Gastrocnemius medialis (tissue), 4 donors: ENCODE measurements at regions of chr19 and their contacts with region 1.

Region 1: DNA sequence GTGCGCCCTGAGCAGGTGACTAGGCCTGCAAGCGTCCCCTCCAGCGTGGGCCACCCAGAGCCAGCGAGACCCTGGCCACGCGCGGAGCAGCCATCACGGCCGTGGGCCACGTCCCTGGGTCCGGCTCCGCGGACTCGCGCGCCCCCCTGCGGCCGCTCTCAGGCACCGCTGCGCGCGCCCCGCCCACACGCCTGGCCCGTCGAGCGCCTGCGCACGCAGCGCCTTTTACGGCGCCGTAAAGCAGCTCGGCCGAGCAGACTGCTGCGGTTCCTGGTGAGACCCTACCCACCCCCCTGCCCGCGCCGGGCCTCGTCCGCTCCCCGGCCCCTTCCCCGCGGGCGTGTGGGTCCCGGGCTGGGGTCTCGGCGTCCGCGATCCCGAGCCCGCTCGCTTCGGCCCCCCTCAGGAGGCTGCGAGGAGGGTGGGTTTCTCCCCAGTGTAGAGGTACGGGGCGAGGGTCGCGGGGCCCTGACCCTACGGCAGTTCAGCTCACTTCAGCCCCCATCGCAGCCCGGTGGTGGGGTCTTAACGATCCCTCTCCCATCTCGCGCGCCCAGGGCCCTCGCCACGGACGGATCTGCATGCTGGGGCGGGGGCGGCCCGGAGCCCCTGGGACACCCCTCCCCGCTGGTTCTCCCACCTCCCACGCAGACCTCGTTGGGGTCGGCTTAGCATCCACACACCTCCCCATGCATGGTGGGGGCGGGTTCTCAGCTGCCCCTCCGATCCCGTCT is at the start of gene TRAPPC5:
- DNase-seq: peak; percentile 55 to 77
- ATAC-seq: peak; percentile 86 to 91
- H3K4me3 ChIP-seq: peak within 1 kb of the TSS; percentile 91 to 100 (median 94)
- H3K27ac ChIP-seq: peak within 1 kb of the TSS; percentile 83 to 94 (median 92)
- H3K4me1 ChIP-seq: peaks cover 4 to 9% of the 10 kb centered on the region in 2 donors
- H3K27me3 ChIP-seq: peaks cover 0 to 10% (median 0%) of the 10 kb centered on the region in 3 donors
- CTCF ChIP-seq: peak in 4 of 5 experiments; percentile 80 to 100 (median 99)
- POLR2A ChIP-seq: peak; percentile 60 to 77
- total RNA-seq, gene TRAPPC5: 109 to 146 (median 126) TPM

Region 2: GRCh38 chr19:7349961-7350711 is 330.6 kb before region 1 on chr19:
- in situ Hi-C with region 1: no loop called
- intact Hi-C with region 1: loop called (anchors 10 kb)
- DNase-seq: no peak
- ATAC-seq: no peak
- H3K4me3 ChIP-seq: no peak overlapping the region
- H3K27ac ChIP-seq: no peak overlapping the region
- H3K4me1 ChIP-seq: no peaks in the 10 kb centered on the region
- H3K27me3 ChIP-seq: peaks cover 0 to 3% (median 0%) of the 10 kb centered on the region in 3 donors
- CTCF ChIP-seq: no peak
- POLR2A ChIP-seq: no peak

Region 3: GRCh38 chr19:7562646-7563393 is 118.0 kb before region 1 on chr19:
- in situ Hi-C with region 1: loop called in 1 of 4 experiments (anchors 10 kb)
- intact Hi-C with region 1: loop called (anchors 1 kb)
- DNase-seq: no peak
- ATAC-seq: no peak
- H3K4me3 ChIP-seq: no peak overlapping the region
- H3K27ac ChIP-seq: no peak overlapping the region
- H3K4me1 ChIP-seq: no peaks in the 10 kb centered on the region
- H3K27me3 ChIP-seq: no peaks in the 10 kb centered on the region
- CTCF ChIP-seq: no peak
- POLR2A ChIP-seq: no peak

Region 4: DNA sequence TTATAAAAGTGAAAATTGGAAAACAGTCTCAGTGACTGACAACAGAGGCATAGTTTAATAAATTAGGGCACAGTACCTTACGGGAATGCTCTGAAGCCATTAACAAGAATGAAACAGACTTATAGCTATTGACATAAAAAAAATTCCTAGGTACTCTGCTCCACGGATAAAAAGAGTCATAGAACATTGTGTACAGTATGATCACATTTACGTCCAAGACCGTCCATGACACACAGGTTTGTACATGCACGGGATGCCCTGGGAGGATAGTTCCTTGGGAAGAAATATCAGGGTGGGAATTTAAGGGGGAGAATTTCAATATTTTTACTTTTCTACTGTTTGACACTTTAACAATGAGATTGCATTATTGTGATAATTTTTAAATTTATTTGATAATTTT is 110.0 kb before region 1 on chr19:
- in situ Hi-C with region 1: loop called in 2 of 4 experiments (anchors 5 to 10 kb)
- intact Hi-C with region 1: loop called (anchors 1 kb)
- DNase-seq: no peak
- ATAC-seq: no peak
- H3K4me3 ChIP-seq: no peak overlapping the region
- H3K27ac ChIP-seq: no peak overlapping the region
- H3K4me1 ChIP-seq: no peaks in the 10 kb centered on the region
- H3K27me3 ChIP-seq: no peaks in the 10 kb centered on the region
- CTCF ChIP-seq: no peak
- POLR2A ChIP-seq: no peak

Region 5: GRCh38 chr19:7652061-7652641 is 28.6 kb before region 1 on chr19:
- in situ Hi-C with region 1: no loop called
- intact Hi-C with region 1: loop called (anchors 1 kb)
- DNase-seq: peak; percentile 74 to 88
- ATAC-seq: peak; percentile 100
- H3K4me3 ChIP-seq: peak overlapping the region in 2 of 4 donors; percentile 15 to 34
- H3K27ac ChIP-seq: peak overlapping the region; percentile 50 to 84 (median 70)
- H3K4me1 ChIP-seq: peaks cover 0 to 4% of the 10 kb centered on the region in 2 donors
- H3K27me3 ChIP-seq: no peaks in the 10 kb centered on the region
- CTCF ChIP-seq: peak; percentile 93 to 99 (median 98)
- POLR2A ChIP-seq: no peak